ENCODE measurements at regions of chr3 and their contacts with region 1.

Region 1: DNA sequence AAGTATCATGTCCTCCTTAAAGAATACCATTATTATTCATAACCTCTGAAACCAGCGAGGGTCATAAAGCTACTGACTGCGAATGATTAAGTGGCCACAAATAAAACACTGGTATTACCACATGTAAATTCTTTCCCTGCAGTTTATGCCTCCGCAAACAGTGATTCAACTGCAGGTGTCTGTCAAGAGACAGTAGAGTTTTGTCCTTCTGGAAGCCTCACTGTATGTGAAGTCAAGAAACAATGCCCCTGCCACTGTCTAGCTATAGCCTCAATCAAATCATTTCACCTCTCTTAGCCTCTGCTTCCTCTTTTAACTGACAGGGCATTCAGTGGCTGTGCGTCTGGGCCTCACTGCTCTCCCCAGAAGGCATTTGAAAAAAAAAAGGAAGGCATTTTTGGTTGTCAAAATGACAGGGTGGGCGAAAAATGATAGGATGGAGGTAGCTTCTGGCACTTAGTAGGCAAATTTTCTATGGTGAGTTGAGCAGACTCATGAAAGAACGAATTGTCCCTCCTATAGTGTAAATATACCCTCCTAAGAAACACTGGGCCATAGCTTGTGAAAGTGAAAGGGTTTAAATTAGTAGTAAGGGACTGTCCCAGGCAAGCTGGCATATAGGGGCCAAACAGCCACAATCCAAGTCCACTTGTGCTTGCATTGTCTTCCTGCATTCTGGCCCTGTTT is 66.7 kb downstream of the FILIP1L start:
- DNase-seq: peak; percentile 97
- H3K4me3 ChIP-seq: peak overlapping the region in 1 of 3 experiments; percentile 5
- H3K27ac ChIP-seq: peak overlapping the region; percentile 80
- H3K4me1 ChIP-seq: peaks cover 40% of the 10 kb centered on the region
- H3K27me3 ChIP-seq: no peaks in the 10 kb centered on the region
- CTCF ChIP-seq: no peak

Region 2: GRCh38 chr3:99875929-99876841 is 171.4 kb before region 1 on chr3:
- CTCF ChIA-PET with region 1: no interaction called
- dilution Hi-C with region 1: no loop called
- in situ Hi-C with region 1: no loop called
- intact Hi-C with region 1: loop called (anchors 10 kb)
- DNase-seq: peak; percentile 54
- H3K4me3 ChIP-seq: peak overlapping the region; percentile 81 to 98 (median 83)
- H3K27ac ChIP-seq: peak overlapping the region; percentile 86
- H3K4me1 ChIP-seq: peaks cover 16% of the 10 kb centered on the region
- H3K27me3 ChIP-seq: no peaks in the 10 kb centered on the region
- CTCF ChIP-seq: no peak

Region 3: DNA sequence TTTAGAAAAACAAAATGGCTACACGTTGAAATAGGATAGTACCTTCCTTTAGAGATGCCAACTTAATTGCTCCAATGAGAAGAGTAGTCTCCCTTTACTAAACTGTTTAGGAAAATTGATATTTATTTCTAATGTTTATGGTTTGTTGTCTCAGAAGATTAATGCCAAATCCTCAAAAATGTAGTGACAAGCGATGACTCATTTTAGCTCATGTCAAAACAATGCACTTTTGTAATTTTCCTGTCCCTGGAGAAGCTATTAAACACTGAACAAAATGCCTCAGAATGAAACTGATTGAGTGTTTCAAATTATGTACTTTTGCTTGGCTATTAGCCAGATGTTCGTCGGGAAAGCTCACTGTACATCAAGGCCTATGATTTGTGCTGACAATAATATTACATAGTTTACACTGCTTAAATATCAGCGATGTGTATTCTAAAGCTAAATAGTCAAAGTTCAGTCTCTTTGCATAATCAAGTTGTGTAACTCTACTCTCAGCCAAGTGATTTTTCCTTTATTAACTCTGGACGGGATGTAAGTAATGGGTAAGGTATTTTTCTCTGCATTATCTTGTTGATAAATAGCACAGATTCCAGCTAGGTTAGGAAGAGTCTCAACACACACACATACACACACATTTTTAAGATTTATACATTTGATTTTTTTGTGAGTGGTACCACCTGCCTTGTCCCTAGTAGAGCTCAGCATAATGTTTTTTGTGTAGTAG is 146.2 kb before region 1 on chr3:
- CTCF ChIA-PET with region 1: no interaction called
- dilution Hi-C with region 1: no loop called
- in situ Hi-C with region 1: no loop called
- intact Hi-C with region 1: loop called (anchors 5 kb)
- DNase-seq: peak; percentile 94
- H3K4me3 ChIP-seq: peak overlapping the region in 1 of 3 experiments; percentile 6
- H3K27ac ChIP-seq: peak overlapping the region; percentile 99
- H3K4me1 ChIP-seq: peaks cover 34% of the 10 kb centered on the region
- H3K27me3 ChIP-seq: no peaks in the 10 kb centered on the region
- CTCF ChIP-seq: no peak

Measured in mammary epithelial cell (primary cell).